ENCODE measurements at regions of chr4 and their contacts with region 1.

Region 1: DNA sequence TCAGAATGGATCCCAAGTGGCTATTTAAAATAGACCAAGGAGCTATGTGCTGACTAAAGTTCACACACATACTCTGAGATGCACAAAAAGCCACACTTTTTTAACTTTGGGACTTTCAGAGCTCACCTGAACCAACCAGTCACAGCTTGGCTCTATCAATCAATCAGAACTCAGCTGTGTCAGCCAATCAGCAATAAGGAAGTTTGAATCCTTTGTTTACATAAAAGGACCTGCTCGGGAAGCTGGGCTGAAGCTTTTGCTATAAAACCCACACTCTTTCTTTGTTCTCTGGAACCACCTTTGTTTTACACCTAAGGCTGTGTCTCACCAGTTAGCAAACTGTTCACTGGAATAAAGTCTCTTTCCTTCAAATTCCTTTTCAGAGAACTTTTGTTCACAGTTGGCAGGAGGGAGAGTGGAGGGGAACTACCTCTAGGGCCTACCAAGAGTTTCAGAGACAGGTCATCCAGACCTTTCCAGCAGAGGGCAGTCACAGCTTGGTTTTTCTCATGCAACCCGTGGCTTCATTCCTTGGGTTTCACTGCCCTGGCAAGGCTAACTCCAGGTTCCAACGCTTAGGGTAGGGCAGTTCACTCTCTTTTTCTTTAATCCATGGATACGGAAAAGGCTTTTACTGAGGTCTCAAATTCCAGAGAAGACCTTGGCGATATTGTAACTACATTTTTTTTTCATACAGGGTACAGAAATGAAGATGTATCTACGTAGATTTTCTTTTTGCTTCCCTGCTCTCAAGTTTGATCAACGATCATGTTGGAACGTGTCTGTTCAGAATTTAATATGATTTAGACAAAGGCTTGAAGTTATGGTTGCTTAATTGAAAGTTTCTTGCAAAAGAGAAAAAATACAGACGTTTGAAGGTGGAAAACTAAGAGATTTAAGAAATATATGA is 80.7 kb downstream of the GPRIN3 start:
- DNase-seq: peak; percentile 71 to 76 (median 73)
- H3K4me3 ChIP-seq: no peak overlapping the region
- H3K4me3 Mint-ChIP-seq: peak overlapping the region; percentile 27 to 76 (median 57)
- H3K27ac ChIP-seq: no peak overlapping the region
- H3K27ac Mint-ChIP-seq: peak overlapping the region; percentile 4 to 83 (median 58)
- H3K4me1 ChIP-seq: peaks cover 4% of the 10 kb centered on the region
- H3K4me1 Mint-ChIP-seq: peaks cover 1 to 5% (median 3%) of the 10 kb centered on the region in 4 donors
- H3K27me3 ChIP-seq: no peaks in the 10 kb centered on the region
- H3K27me3 Mint-ChIP-seq: no peaks in the 10 kb centered on the region

Region 2: DNA sequence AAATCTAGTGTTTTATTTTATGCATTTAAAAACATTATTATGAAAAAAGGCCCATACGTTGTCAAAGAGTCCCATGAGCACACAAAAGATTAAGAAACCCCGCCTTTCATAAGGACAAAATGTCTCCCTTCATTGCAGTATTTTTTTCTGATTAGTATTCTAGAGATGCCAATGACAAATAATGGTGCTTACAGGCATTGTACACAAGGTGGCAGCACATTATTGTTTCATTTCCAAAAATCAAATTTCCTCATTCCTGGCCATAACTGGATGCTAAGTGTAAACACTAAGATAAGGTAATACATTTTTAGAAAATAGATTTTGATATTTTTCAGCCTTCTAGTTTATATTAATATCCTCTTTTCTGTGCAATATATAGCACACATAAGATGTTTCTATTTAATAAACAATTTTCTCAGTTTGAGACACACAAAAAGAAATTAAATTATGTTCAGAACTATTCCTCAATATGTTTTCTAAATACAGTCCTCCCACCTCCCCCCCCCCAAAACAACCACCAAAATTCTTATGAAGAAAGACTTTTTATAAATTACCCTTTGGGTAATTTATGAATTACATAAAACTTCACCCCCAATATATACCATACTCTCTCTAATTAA is 67.9 kb before region 1 on chr4:
- CTCF ChIA-PET with region 1: interaction called, 6 read pairs
- POLR2A ChIA-PET with region 1: no interaction called
- intact Hi-C with region 1: loop called (anchors 5 kb)
- DNase-seq: peak in 4 of 5 donors; percentile 22 to 39 (median 34)
- H3K4me3 ChIP-seq: no peak overlapping the region
- H3K4me3 Mint-ChIP-seq: no peak overlapping the region
- H3K27ac ChIP-seq: no peak overlapping the region
- H3K27ac Mint-ChIP-seq: no peak overlapping the region
- H3K4me1 ChIP-seq: no peaks in the 10 kb centered on the region
- H3K4me1 Mint-ChIP-seq: peaks cover 0 to 2% (median 0%) of the 10 kb centered on the region in 4 donors
- H3K27me3 ChIP-seq: no peaks in the 10 kb centered on the region
- H3K27me3 Mint-ChIP-seq: peaks cover 0 to 1% of the 10 kb centered on the region in 2 donors

Region 3: GRCh38 chr4:89216866-89217265 is 10.1 kb before region 1 on chr4:
- CTCF ChIA-PET with region 1: interaction called, 14 read pairs
- POLR2A ChIA-PET with region 1: no interaction called
- intact Hi-C with region 1: no loop called
- DNase-seq: no peak
- H3K4me3 ChIP-seq: no peak overlapping the region
- H3K4me3 Mint-ChIP-seq: no peak overlapping the region
- H3K27ac ChIP-seq: no peak overlapping the region
- H3K27ac Mint-ChIP-seq: no peak overlapping the region
- H3K4me1 ChIP-seq: no peaks in the 10 kb centered on the region
- H3K4me1 Mint-ChIP-seq: no peaks in the 10 kb centered on the region
- H3K27me3 ChIP-seq: no peaks in the 10 kb centered on the region
- H3K27me3 Mint-ChIP-seq: peaks cover 3 to 4% of the 10 kb centered on the region in 2 donors

Region 4: GRCh38 chr4:89353514-89353913 is 126.6 kb after region 1 on chr4:
- CTCF ChIA-PET with region 1: interaction called, 10 read pairs
- POLR2A ChIA-PET with region 1: no interaction called
- intact Hi-C with region 1: no loop called
- DNase-seq: no peak
- H3K4me3 ChIP-seq: no peak overlapping the region
- H3K4me3 Mint-ChIP-seq: no peak overlapping the region
- H3K27ac ChIP-seq: no peak overlapping the region
- H3K27ac Mint-ChIP-seq: peak overlapping the region in 1 of 7 donors; percentile 72
- H3K4me1 ChIP-seq: no peaks in the 10 kb centered on the region
- H3K4me1 Mint-ChIP-seq: peaks cover 0 to 8% (median 0%) of the 10 kb centered on the region in 4 donors
- H3K27me3 ChIP-seq: no peaks in the 10 kb centered on the region
- H3K27me3 Mint-ChIP-seq: no peaks in the 10 kb centered on the region

Region 5: DNA sequence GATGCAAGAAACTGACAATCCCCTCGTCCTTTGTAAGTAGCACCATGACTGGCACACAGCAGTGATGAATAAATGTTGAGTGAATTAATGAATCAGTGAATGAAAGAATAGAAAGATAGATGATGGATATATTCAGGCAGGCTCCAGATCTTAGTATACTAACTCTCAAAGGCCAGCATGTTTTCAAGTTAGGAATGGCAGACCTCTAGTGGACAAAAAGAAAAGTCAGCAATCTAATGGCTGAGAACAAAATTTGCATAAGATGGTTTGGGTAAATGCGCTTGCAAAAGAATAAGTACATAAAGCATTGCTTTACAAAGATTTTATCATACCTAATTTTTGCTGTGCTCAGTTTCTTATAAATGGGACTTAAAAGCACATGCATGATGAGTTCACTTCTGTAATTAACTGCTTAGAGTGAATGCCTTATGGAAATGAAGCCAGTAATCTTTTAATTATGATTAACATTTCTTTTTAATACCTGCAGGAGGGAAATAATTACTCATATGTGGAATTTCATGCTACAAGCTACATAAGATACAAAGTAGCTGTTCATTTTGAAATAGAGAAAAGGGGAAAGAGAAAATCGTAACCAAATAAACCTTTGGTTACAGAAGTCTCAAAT is 207.6 kb after region 1 on chr4:
- CTCF ChIA-PET with region 1: interaction called, 190 read pairs
- POLR2A ChIA-PET with region 1: interaction called, 4 read pairs
- intact Hi-C with region 1: loop called (anchors 1 kb)
- DNase-seq: peak in 4 of 5 donors; percentile 48 to 58 (median 55)
- H3K4me3 ChIP-seq: no peak overlapping the region
- H3K4me3 Mint-ChIP-seq: no peak overlapping the region
- H3K27ac ChIP-seq: no peak overlapping the region
- H3K27ac Mint-ChIP-seq: no peak overlapping the region
- H3K4me1 ChIP-seq: peaks cover 16% of the 10 kb centered on the region
- H3K4me1 Mint-ChIP-seq: peaks cover 13 to 16% (median 14%) of the 10 kb centered on the region in 4 donors
- H3K27me3 ChIP-seq: no peaks in the 10 kb centered on the region
- H3K27me3 Mint-ChIP-seq: peaks cover 0 to 3% of the 10 kb centered on the region in 2 donors

Region 6: GRCh38 chr4:89572224-89572858 is 345.4 kb after region 1 on chr4:
- CTCF ChIA-PET with region 1: no interaction called
- POLR2A ChIA-PET with region 1: no interaction called
- intact Hi-C with region 1: no loop called
- DNase-seq: no peak
- H3K4me3 ChIP-seq: no peak overlapping the region
- H3K4me3 Mint-ChIP-seq: no peak overlapping the region
- H3K27ac ChIP-seq: no peak overlapping the region
- H3K27ac Mint-ChIP-seq: no peak overlapping the region
- H3K4me1 ChIP-seq: no peaks in the 10 kb centered on the region
- H3K4me1 Mint-ChIP-seq: no peaks in the 10 kb centered on the region
- H3K27me3 ChIP-seq: no peaks in the 10 kb centered on the region
- H3K27me3 Mint-ChIP-seq: peaks cover 4 to 7% of the 10 kb centered on the region in 2 donors

Region 7: DNA sequence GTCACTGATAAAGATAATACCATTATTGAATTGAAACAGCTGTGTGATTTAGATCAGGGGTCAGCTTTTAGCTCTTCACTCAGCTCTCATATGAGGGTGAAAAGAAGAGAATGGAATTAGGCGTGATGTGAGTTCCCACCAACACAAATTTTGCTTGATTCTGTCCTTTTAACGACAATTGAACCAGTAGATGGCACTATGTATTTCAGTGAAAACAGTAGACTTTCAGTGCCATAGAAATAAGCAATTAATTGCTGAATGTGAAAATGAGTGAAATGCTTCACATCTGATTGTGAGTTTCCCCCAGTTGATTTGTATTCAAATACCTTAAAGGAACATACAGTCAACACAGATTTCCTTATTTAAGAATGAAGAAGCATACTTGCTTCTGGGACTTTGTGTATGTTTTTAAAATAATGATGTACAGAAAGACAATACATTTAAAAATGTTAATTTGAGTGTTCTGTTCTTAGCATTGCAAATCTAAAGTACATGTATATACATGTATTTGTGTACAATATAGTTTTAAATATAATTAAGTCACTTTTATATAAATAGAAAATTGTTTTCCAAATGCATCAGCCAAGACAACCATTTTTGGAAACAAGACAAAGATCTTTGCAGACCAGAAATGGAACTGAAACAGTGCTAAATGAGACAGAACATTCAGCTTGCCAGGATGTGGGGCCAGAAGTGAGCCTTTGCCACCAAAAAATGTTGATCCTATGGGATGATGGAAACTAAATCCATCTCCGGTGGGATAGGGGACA is 431.2 kb after region 1 on chr4:
- CTCF ChIA-PET with region 1: no interaction called
- POLR2A ChIA-PET with region 1: no interaction called
- intact Hi-C with region 1: loop called (anchors 5 kb)
- DNase-seq: peak in 1 of 5 donors; percentile 4
- H3K4me3 ChIP-seq: no peak overlapping the region
- H3K4me3 Mint-ChIP-seq: no peak overlapping the region
- H3K27ac ChIP-seq: no peak overlapping the region
- H3K27ac Mint-ChIP-seq: no peak overlapping the region
- H3K4me1 ChIP-seq: no peaks in the 10 kb centered on the region
- H3K4me1 Mint-ChIP-seq: no peaks in the 10 kb centered on the region
- H3K27me3 ChIP-seq: no peaks in the 10 kb centered on the region
- H3K27me3 Mint-ChIP-seq: peaks cover 5 to 10% of the 10 kb centered on the region in 2 donors

Measured in CD4-positive, alpha-beta memory T cell (primary cell).